ENCODE measurements at regions of chr3 and their contacts with region 1.

Region 1: GRCh38 chr3:120602682-120603081 is 6.5 kb downstream of the NDUFB4 start:
- DNase-seq: no peak
- H3K4me3 ChIP-seq: no peak overlapping the region
- H3K27ac ChIP-seq: no peak overlapping the region
- H3K4me1 ChIP-seq: no peaks in the 10 kb centered on the region
- H3K27me3 ChIP-seq: no peaks in the 10 kb centered on the region
- CTCF ChIP-seq: no peak

Region 2: GRCh38 chr3:119570216-119570615 is 1032.5 kb before region 1 on chr3:
- CTCF ChIA-PET with region 1: no interaction called
- POLR2A ChIA-PET with region 1: interaction called, 11 read pairs
- intact Hi-C with region 1: no loop called
- DNase-seq: no peak
- H3K4me3 ChIP-seq: no peak overlapping the region
- H3K27ac ChIP-seq: no peak overlapping the region
- H3K4me1 ChIP-seq: no peaks in the 10 kb centered on the region
- H3K27me3 ChIP-seq: peaks cover 18% of the 10 kb centered on the region
- CTCF ChIP-seq: no peak